ENCODE measurements at regions of chr5 and their contacts with region 1.

Region 1: DNA sequence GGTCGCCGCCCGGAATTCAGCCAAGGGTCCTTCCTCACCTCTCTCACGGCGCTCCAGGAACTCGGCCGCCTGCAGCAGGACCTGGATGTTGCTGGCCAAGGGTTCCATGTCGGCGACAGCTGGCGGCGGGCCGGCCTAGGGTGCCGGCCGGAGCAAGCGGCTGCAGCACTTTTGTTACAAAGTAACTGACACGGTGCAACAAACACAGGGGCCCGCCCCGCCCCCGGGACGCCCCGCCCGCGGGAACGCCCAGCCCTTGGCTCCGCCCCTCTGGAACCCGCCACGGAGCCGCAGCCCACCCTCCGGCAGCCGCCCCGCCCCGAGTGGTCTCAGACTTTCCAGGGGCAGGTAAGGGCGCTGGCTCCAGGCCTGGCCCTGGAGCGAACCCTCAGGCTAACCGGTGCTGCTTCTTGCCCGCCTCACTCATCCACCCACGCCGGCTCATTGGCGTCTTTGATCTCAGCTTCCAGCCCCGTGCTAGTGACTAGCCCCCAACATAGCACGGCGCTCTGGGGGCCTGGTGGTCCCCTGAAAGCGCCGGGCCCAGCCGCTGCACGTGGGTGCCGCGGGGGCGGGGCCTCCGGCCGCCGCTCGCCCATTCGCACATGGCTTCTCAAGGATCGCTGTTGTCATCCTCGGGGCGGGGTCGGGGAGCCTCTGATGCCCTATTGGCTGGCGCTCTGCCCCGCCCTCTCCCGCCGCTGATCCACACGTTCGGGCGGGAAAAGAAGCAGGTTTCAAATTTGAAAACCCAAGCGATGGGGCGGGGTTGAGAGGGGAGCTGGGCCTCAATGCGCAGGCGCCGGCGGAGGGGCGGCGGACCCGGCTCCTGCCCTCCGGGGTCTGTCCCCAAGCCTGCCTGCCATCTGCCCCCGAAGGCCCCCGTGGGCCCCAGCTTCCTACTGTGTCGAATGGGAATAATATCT is at the start of gene MXD3:
- DNase-seq: peak; percentile 94 to 97 (median 96)
- H3K4me3 ChIP-seq: peak within 1 kb of the TSS; percentile 41 to 89 (median 70)
- H3K27ac ChIP-seq: peak within 1 kb of the TSS in 1 of 2 experiments; percentile 58
- H3K4me1 ChIP-seq: peaks cover 4 to 63% (median 59%) of the 10 kb centered on the region in 4 experiments
- H3K27me3 ChIP-seq: no peaks in the 10 kb centered on the region

Region 2: GRCh38 chr5:177327539-177328522 is 15.8 kb after region 1 on chr5:
- CTCF ChIA-PET with region 1: interaction called, 162 read pairs
- POLR2A ChIA-PET with region 1: interaction called, 4 read pairs
- DNase-seq: peak in 2 of 3 donors; percentile 60 to 66
- H3K4me3 ChIP-seq: peak overlapping the region in 1 of 7 experiments; percentile 34
- H3K27ac ChIP-seq: no peak overlapping the region
- H3K4me1 ChIP-seq: peaks cover 3 to 52% (median 32%) of the 10 kb centered on the region in 4 experiments
- H3K27me3 ChIP-seq: no peaks in the 10 kb centered on the region

Region 3: DNA sequence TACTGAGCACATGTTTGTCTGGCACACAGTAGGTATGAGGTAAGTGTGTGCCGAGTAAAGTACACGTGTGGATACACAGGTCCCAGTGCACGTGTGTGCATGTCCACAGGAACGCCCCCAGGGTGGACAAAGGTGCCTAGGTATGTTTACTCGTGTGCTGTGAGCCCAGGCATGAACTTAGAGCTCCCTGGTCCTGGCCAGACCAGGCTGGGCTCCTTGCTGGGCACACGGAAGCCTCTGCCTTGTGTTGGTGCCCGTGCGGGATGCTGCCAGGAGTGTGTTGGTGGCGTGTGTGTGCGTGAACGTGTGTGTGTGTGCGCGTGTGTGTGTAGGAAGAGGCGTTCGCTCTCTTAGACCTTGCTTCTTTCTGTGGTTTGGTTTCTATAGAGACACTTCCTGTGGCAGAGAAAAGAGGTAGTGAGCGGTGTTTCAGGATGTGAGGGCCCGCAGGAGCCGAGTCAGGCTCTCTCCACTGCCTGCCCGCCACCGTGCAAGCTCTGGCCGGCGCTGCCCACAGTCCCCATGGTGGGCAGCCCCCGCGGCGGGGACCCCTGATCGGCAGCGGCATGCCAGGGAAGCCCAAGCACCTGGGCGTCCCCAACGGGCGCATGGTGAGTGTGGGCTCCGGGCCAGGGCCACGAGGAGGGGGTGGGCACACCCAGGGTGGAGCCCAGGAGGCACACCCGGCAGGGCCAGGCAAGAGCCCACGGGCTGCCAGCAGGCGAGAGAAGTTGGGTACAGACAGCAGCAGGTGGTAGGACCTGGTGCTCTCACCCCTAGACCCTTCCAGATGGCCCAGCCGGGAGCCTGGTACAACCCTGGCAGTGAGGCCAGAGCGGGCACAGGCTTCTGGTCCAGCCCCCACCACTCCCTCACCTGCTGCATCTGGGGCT is 45.7 kb after region 1 on chr5 and contains the start of gene RGS14:
- CTCF ChIA-PET with region 1: interaction called, 44 read pairs
- POLR2A ChIA-PET with region 1: interaction called, 5 read pairs
- DNase-seq: peak; percentile 94 to 98 (median 96)
- H3K4me3 ChIP-seq: peak within 1 kb of the TSS; percentile 65 to 93 (median 84)
- H3K27ac ChIP-seq: peak within 1 kb of the TSS; percentile 77 to 85
- H3K4me1 ChIP-seq: peaks cover 8 to 83% (median 72%) of the 10 kb centered on the region in 4 experiments
- H3K27me3 ChIP-seq: no peaks in the 10 kb centered on the region

Region 4: DNA sequence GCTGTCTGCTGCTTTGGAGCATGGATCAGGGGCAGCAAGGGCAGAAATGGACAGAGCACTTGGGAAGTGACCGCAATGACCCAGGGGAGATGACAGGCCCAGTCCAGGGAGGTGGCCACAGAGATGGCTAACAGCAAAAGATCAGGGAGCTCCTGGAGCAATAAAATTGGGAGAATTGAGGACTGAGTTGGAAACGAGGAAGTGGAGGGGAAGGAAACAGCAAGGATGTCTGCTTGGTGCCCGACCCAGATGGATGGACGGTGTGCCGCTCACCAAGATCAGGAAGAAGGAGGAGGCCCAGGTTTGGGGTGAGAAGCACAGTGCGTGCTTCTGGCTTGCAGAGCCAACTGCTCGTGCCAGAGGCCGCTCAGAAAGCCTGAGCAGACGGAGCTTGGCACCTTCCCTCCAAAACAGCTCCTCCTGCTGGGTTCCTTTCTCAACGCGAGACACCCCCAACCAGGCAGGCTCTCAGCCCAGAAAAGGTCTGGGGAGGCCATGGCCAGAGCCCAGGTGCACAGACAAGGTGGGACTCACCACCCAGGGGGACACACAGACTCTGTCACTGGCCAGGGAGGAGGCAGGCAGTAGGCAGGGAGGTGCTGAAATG is 70.5 kb after region 1 on chr5:
- CTCF ChIA-PET with region 1: interaction called, 22 read pairs
- POLR2A ChIA-PET with region 1: no interaction called
- DNase-seq: peak; percentile 69 to 78 (median 76)
- H3K4me3 ChIP-seq: no peak overlapping the region
- H3K27ac ChIP-seq: no peak overlapping the region
- H3K4me1 ChIP-seq: peaks cover 5 to 35% (median 28%) of the 10 kb centered on the region in 4 experiments
- H3K27me3 ChIP-seq: no peaks in the 10 kb centered on the region

Region 5: GRCh38 chr5:178204182-178204894 is 892.4 kb after region 1 on chr5 and contains the start of gene HNRNPAB:
- CTCF ChIA-PET with region 1: no interaction called
- POLR2A ChIA-PET with region 1: no interaction called
- DNase-seq: peak; percentile 96 to 98 (median 97)
- H3K4me3 ChIP-seq: peak within 1 kb of the TSS; percentile 77 to 97 (median 90)
- H3K27ac ChIP-seq: peak within 1 kb of the TSS; percentile 46 to 80
- H3K4me1 ChIP-seq: peaks cover 12 to 59% (median 49%) of the 10 kb centered on the region in 4 experiments
- H3K27me3 ChIP-seq: no peaks in the 10 kb centered on the region